Activated CD4-positive, alpha-beta T cell treated with anti-CD3 and anti-CD28 coated beads for 36 hours (primary cell): ENCODE measurements at regions of chr6 and their contacts with region 1.

Region 1: DNA sequence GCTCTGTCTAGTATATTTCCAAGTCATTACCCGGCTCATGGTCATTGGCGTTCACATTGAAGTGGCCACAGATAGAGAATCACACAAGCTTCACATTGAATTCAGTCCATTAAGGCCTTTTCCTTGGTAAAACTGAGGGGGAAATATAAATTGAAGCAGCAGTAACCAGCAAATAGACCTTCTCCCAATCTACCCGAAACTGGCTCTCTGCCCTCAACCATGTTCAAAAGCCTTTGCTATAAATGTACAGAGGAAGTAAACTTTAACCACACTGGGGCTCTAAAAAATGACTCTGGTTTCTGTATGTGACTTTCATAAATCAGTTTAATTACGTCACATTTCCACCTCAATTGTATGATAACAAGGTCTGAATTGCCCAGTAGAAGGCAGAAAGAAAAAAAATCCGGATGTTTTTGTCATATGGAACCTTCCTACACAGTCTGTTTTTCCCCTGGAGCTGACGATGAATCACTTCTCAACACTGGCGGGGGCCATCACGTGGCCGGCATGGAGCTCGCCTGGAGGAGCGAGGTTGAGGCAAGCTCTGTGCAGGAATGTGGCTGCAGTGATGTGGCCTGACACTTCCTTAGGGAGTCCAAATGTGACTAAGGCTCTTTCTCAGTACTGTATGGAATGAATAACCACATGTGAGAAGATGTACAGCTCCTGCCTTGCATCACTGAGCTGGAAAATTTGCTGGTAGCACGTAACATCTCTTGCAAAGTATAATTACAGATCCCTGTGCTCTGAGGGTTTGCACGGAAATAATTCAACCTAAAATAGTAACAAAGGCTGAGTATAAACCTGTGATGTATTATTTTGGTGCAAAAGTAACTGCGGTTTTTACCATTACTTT is 58.6 kb upstream of the SNX9 start:
- DNase-seq: peak; percentile 93
- ATAC-seq: peak; percentile 69
- H3K4me3 Mint-ChIP-seq: peak overlapping the region; percentile 41
- H3K27ac Mint-ChIP-seq: peak overlapping the region; percentile 91
- H3K4me1 Mint-ChIP-seq: peaks cover 87% of the 10 kb centered on the region
- H3K27me3 Mint-ChIP-seq: peaks cover 2% of the 10 kb centered on the region

Region 2: GRCh38 chr6:157107915-157108651 is 656.3 kb before region 1 on chr6:
- CTCF ChIA-PET with region 1: no interaction called
- POLR2A ChIA-PET with region 1: no interaction called
- intact Hi-C with region 1: loop called in 1 of 2 experiments (anchors 5 kb)
- DNase-seq: peak; percentile 42
- ATAC-seq: peak; percentile 87
- H3K4me3 Mint-ChIP-seq: no peak overlapping the region
- H3K27ac Mint-ChIP-seq: peak overlapping the region; percentile 38
- H3K4me1 Mint-ChIP-seq: peaks cover 53% of the 10 kb centered on the region
- H3K27me3 Mint-ChIP-seq: no peaks in the 10 kb centered on the region

Region 3: GRCh38 chr6:157535339-157536222 is 228.8 kb before region 1 on chr6:
- CTCF ChIA-PET with region 1: no interaction called
- POLR2A ChIA-PET with region 1: no interaction called
- intact Hi-C with region 1: loop called (anchors 2 to 5 kb)
- DNase-seq: peak; percentile 49
- ATAC-seq: peak; percentile 88
- H3K4me3 Mint-ChIP-seq: peak overlapping the region; percentile 47
- H3K27ac Mint-ChIP-seq: peak overlapping the region; percentile 88
- H3K4me1 Mint-ChIP-seq: peaks cover 35% of the 10 kb centered on the region
- H3K27me3 Mint-ChIP-seq: peaks cover 9% of the 10 kb centered on the region

Region 4: GRCh38 chr6:157557559-157557958 is 206.8 kb before region 1 on chr6:
- CTCF ChIA-PET with region 1: no interaction called
- POLR2A ChIA-PET with region 1: no interaction called
- intact Hi-C with region 1: no loop called
- DNase-seq: no peak
- ATAC-seq: no peak
- H3K4me3 Mint-ChIP-seq: no peak overlapping the region
- H3K27ac Mint-ChIP-seq: no peak overlapping the region
- H3K4me1 Mint-ChIP-seq: peaks cover 21% of the 10 kb centered on the region
- H3K27me3 Mint-ChIP-seq: no peaks in the 10 kb centered on the region

Region 5: GRCh38 chr6:157823001-157823527 is 58.7 kb after region 1 on chr6 and contains the start of gene SNX9:
- CTCF ChIA-PET with region 1: interaction called, 4 read pairs
- POLR2A ChIA-PET with region 1: interaction called, 4 read pairs
- intact Hi-C with region 1: loop called (anchors 1 kb)
- DNase-seq: peak; percentile 84
- ATAC-seq: peak; percentile 59
- H3K4me3 Mint-ChIP-seq: peak within 1 kb of the TSS; percentile 92
- H3K27ac Mint-ChIP-seq: peak within 1 kb of the TSS; percentile 99
- H3K4me1 Mint-ChIP-seq: peaks cover 48% of the 10 kb centered on the region
- H3K27me3 Mint-ChIP-seq: peaks cover 11% of the 10 kb centered on the region
- total RNA-seq, gene SNX9: 39.4 to 43.3 TPM

Region 6: DNA sequence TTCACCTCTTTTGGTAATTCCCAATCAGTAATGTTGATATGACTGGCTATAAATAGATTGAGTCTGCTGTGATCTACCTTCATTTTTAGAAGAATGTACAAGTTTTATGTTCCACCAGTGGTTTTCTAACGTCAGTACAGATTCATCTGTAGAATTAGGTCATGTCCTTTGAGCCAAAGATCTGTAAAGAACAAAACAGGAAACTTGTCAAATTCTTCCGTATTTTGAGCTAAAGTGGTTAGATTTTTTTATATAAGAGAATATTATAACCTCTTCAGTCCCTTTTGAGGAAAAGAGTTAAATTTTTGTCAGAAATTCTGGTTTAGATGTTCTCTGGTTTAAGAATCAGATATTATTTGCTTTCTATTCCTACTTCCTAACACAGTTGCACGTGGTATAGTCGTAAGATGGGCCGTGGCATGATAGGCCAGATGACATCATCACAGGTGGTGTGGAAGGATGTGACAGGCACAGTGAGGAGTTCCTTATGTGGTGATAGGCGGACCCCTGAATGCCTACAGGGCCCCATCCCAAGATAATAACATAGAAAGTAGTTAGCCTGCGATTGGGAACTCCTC is 120.9 kb after region 1 on chr6:
- CTCF ChIA-PET with region 1: interaction called, 6 read pairs
- POLR2A ChIA-PET with region 1: interaction called, 4 read pairs
- intact Hi-C with region 1: loop called (anchors 1 kb)
- DNase-seq: peak; percentile 78
- ATAC-seq: peak; percentile 89
- H3K4me3 Mint-ChIP-seq: peak overlapping the region; percentile 17
- H3K27ac Mint-ChIP-seq: peak overlapping the region; percentile 92
- H3K4me1 Mint-ChIP-seq: peaks cover 76% of the 10 kb centered on the region
- H3K27me3 Mint-ChIP-seq: no peaks in the 10 kb centered on the region

Region 7: DNA sequence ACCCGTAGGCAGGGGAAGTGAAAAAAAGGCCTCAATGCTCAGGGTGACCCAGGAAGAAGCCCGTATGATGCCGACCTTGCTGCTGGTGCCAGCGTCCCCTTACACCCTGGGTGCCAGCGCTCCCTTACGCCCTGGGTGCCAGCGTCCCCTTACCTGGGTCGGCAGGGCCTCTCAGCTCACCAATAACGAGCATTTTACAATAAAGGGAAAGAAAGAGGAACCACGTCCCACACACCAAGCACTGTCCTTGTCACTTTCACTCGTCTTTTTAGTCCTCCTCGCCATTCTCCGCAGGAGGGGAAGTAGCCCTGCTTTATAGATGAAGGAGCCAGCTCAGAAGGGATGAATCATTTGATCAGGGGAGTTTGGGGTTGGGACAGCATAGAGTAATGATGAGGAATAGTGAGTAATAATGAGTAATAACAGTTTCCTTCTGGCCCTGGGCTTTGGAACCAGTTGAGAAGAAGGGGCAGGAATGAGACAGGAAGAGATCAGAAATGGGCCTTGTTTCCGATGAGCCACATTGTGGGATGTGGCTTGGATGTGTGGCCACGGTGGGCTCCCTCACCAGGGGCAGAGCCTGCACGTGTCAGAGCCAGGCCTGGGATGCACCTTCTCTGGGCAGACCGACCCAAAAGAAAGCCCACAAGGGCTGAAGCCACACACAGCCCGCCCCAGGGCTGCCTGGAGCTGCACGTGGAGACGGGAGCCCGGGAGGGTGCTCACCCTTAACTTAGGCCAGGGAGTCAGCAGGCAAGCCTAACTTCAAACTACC is 293.0 kb after region 1 on chr6:
- CTCF ChIA-PET with region 1: no interaction called
- POLR2A ChIA-PET with region 1: no interaction called
- intact Hi-C with region 1: loop called in 1 of 2 experiments (anchors 5 kb)
- DNase-seq: peak; percentile 76
- ATAC-seq: peak; percentile 97
- H3K4me3 Mint-ChIP-seq: no peak overlapping the region
- H3K27ac Mint-ChIP-seq: peak overlapping the region; percentile 59
- H3K4me1 Mint-ChIP-seq: peaks cover 59% of the 10 kb centered on the region
- H3K27me3 Mint-ChIP-seq: no peaks in the 10 kb centered on the region